ENCODE measurements at regions of chr3 and their contacts with region 1.

Region 1: GRCh38 chr3:133805527-133806475 is at the start of gene SRPRB:
- DNase-seq: peak; percentile 98
- H3K4me3 Mint-ChIP-seq: peak within 1 kb of the TSS; percentile 98
- H3K27ac Mint-ChIP-seq: peak within 1 kb of the TSS; percentile 80
- H3K4me1 Mint-ChIP-seq: peaks cover 7% of the 10 kb centered on the region
- H3K27me3 Mint-ChIP-seq: peaks cover 19% of the 10 kb centered on the region
- CTCF ChIP-seq: no peak
- total RNA-seq, gene SRPRB: 113 and 115 TPM in 2 replicates

Region 2: DNA sequence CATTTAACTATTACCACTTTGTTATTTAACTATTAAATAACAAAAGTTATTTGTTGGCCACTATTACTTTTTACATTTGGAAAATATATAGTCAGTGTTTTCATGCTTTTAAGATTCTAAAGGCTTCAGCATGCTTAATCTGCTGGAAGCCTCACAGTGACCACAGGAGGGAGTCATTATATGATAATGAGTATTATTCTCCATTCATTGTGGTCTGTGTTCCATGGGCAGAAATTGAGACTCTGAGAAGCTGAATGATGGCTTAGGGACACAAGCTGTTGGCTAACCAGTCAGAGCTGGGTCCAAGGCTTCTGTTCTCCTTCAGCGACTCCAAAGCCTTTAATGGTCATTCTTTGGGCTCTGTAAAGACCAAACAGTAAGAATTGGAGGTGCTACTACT is 341.2 kb before region 1 on chr3:
- CTCF ChIA-PET with region 1: no interaction called
- intact Hi-C with region 1: loop called (anchors 10 kb)
- DNase-seq: peak; percentile 21
- H3K4me3 Mint-ChIP-seq: no peak overlapping the region
- H3K27ac Mint-ChIP-seq: no peak overlapping the region
- H3K4me1 Mint-ChIP-seq: peaks cover 23% of the 10 kb centered on the region
- H3K27me3 Mint-ChIP-seq: no peaks in the 10 kb centered on the region
- CTCF ChIP-seq: peak; percentile 22

Region 3: DNA sequence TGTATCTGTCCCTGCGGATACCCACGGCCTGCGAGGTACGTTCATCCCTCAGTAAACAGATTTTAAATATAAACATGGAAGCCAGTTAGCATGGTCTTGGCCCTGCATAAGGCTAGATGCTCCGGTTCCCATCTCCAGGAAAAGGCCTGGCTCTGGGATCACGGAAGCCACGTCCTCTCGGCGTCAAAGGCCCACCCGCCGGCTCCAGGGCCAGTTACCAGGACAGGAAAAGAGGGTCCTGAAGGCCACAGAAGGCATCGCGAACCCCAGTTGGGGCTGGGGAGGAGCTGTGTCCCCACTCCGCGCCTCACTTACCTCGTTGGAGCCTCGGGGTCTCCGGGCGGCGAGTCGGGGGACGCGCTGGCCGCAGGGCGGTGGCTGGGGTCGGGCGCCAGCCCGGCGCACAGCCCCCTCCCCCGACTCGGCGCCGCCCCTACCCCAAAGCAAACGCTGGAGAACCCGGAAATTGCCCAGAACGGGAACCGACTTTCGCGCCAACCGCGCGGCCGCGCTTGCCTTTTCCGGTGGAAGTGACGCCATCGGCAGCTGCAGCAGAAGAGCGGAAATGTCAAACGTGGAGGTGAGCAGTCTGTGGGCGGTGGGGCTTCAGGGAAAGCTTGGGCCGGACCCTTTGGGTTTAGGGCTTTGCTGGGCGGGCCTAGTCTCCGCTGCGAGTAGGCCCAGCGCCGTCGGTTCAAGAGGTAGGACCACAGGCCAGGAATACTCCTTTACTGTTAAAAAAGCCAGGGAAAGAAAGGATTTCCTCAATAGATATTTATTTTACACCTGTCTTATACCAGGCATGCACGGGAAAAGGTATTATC is 144.1 kb before region 1 on chr3 and contains the start of gene TOPBP1:
- CTCF ChIA-PET with region 1: interaction called, 6 read pairs
- intact Hi-C with region 1: loop called (anchors 1 kb)
- DNase-seq: peak; percentile 91
- H3K4me3 Mint-ChIP-seq: peak within 1 kb of the TSS; percentile 82
- H3K27ac Mint-ChIP-seq: peak within 1 kb of the TSS; percentile 59
- H3K4me1 Mint-ChIP-seq: peaks cover 32% of the 10 kb centered on the region
- H3K27me3 Mint-ChIP-seq: no peaks in the 10 kb centered on the region
- CTCF ChIP-seq: no peak
- total RNA-seq, gene TOPBP1: 86.6 and 94.7 TPM in 2 replicates

Region 4: GRCh38 chr3:134018850-134019249 is 213.0 kb after region 1 on chr3:
- CTCF ChIA-PET with region 1: no interaction called
- intact Hi-C with region 1: no loop called
- DNase-seq: no peak
- H3K4me3 Mint-ChIP-seq: no peak overlapping the region
- H3K27ac Mint-ChIP-seq: no peak overlapping the region
- H3K4me1 Mint-ChIP-seq: no peaks in the 10 kb centered on the region
- H3K27me3 Mint-ChIP-seq: peaks cover 91% of the 10 kb centered on the region
- CTCF ChIP-seq: no peak